GM18951 (cell line): ENCODE measurements at regions of chr2 and their contacts with region 1.

Region 1: GRCh38 chr2:25822190-25823117 is 55.8 kb downstream of the ASXL2 start:
- POLR2A ChIP-seq: peak; percentile 44

Region 2: DNA sequence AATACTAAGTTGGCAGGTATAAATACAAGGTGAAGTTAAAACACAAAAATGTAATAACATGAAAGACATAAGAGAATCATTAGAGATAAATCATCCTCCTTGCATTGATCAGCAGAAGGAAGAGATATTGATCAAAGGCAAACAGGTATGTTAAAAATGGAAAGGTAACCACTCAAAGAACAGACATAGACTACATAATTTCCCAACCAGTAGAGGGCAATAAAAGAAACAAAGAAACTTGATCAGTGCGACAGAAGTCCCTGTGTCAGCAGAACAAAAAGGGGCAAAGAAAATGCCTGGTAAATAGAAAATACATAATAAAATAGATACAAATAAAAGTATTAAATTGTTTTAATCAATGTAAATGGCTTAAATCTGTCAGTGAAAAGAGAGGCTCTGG is 1594.0 kb before region 1 on chr2:
- in situ Hi-C with region 1: no loop called
- POLR2A ChIP-seq: no peak

Region 3: GRCh38 chr2:25618642-25619037 is 203.8 kb before region 1 on chr2:
- in situ Hi-C with region 1: loop called (anchors 10 kb)
- POLR2A ChIP-seq: no peak